Gastrocnemius medialis (tissue), 4 donors: ENCODE measurements at regions of chr3 and their contacts with region 1.

Region 1: GRCh38 chr3:70982700-70983140 is 600.8 kb downstream of the FOXP1 start:
- DNase-seq: peak; percentile 17 to 46
- ATAC-seq: peak; percentile 80 to 83
- H3K4me3 ChIP-seq: peak overlapping the region; percentile 3 to 18 (median 8)
- H3K27ac ChIP-seq: peak overlapping the region; percentile 78 to 81 (median 80)
- H3K4me1 ChIP-seq: peaks cover 30 to 38% of the 10 kb centered on the region in 2 donors
- H3K27me3 ChIP-seq: no peaks in the 10 kb centered on the region
- CTCF ChIP-seq: no peak
- POLR2A ChIP-seq: no peak

Region 2: DNA sequence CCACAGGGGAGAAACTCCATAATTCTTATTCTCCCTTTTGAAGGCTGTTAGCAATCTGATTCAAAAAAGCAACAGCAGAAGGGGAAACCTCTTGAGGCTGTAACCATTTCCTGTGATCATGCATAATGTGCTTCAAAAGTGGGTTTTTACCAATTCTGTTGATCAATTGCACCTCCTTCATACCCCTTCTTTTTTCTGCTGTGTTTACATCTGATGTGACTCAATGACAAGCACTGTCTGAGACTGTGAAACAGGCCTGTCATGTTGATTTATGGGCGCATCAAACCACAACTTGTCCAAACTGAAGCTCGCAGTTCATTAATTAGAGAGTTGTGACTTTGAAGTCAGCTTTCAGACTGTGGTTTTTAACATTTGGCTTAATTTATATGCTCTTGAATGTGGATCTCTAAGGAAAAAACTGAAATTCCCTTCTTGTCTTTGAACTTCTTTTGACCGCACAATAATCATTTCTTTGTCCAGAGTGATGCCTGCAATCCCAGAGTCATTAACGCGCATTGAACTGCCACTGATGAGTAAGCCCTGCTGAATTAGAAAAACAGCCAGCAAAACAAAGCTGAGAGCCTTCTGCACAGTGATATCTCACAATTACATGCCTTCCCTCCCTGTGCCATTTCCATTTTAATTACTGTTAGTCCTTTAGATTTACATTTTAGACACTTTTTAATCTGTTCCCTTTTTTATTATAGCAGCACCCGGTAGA is 68.0 kb after region 1 on chr3:
- in situ Hi-C with region 1: loop called in 1 of 4 experiments (anchors 10 kb)
- intact Hi-C with region 1: no loop called
- DNase-seq: no peak
- ATAC-seq: no peak
- H3K4me3 ChIP-seq: no peak overlapping the region
- H3K27ac ChIP-seq: peak overlapping the region in 3 of 4 donors; percentile 15 to 70 (median 32)
- H3K4me1 ChIP-seq: peaks cover 40 to 62% of the 10 kb centered on the region in 2 donors
- H3K27me3 ChIP-seq: no peaks in the 10 kb centered on the region
- CTCF ChIP-seq: no peak
- POLR2A ChIP-seq: no peak